GM12878 (cell line): ENCODE measurements at regions of chrX and their contacts with region 1.

Region 1: GRCh38 chrX:48826135-48826875 is at the start of gene ERAS:
- DNase-seq: no peak
- ATAC-seq: no peak
- H3K4me3 ChIP-seq: no peak within 1 kb of the TSS
- H3K27ac ChIP-seq: no peak within 1 kb of the TSS
- H3K4me1 ChIP-seq: no peaks in the 10 kb centered on the region
- H3K27me3 ChIP-seq: 0 out of 4 replicates have a peak, but pooled peaks cover 0 to 2% of the 10 kb centered on the region in 2 experiments
- CTCF ChIP-seq: 0 out of 6 replicates have a peak, but pooled peaks of 1 of the 3 experiments have one; percentile 5
- EP300 ChIP-seq: no peak
- POLR2A ChIP-seq: no peak
- RAD21 ChIP-seq: no peak
- polyA plus RNA-seq, gene ERAS: not detected

Region 2: DNA sequence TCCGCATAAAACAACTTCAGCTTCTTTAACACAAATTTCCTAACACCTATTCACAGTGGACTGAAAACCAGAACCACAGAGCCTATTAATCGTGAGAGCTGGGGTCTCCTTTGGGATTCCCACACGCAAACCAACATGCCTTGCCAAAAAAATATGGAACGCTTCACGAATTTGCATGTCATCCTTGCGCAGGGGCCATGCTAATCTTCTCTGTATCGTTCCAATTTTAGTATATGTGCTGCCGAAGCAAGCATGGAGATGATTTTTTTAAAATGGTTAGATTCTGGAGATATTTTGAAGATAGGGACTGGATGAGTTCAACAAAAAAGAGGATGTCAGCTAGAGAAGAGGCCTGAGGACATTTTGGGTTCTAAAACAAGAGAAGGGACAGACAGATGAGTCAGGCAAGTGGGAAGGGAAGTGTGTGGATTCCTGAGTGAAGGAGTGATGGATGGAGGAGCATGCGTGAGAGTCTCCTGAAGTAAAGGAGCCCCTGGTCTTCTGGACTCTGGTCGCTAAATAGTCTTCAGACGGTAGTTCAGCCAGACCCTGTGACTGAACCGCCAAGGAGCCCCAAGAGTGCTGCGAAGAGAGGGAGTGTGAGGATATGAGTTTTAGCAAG is 49.4 kb before region 1 on chrX:
- CTCF ChIA-PET with region 1: no interaction called
- POLR2A ChIA-PET with region 1: no interaction called
- RAD21 ChIA-PET with region 1: no interaction called
- SMC1A ChIA-PET with region 1: no interaction called
- in situ Hi-C with region 1: loop called (anchors 10 kb)
- intact Hi-C with region 1: no loop called
- DNase-seq: no peak
- ATAC-seq: no peak
- H3K4me3 ChIP-seq: no peak overlapping the region
- H3K27ac ChIP-seq: no peak overlapping the region
- H3K4me1 ChIP-seq: no peaks in the 10 kb centered on the region
- H3K27me3 ChIP-seq: no peaks in the 10 kb centered on the region
- CTCF ChIP-seq: no peak
- EP300 ChIP-seq: no peak
- POLR2A ChIP-seq: no peak
- RAD21 ChIP-seq: no peak

Region 3: GRCh38 chrX:48794911-48795501 is 31.3 kb before region 1 on chrX:
- CTCF ChIA-PET with region 1: no interaction called
- POLR2A ChIA-PET with region 1: no interaction called
- RAD21 ChIA-PET with region 1: no interaction called
- SMC1A ChIA-PET with region 1: no interaction called
- in situ Hi-C with region 1: loop called (anchors 5 kb)
- intact Hi-C with region 1: no loop called
- DNase-seq: no peak
- ATAC-seq: no peak
- H3K4me3 ChIP-seq: no peak overlapping the region
- H3K27ac ChIP-seq: no peak overlapping the region
- H3K4me1 ChIP-seq: no peaks in the 10 kb centered on the region
- H3K27me3 ChIP-seq: no peaks in the 10 kb centered on the region
- CTCF ChIP-seq: no peak
- EP300 ChIP-seq: no peak
- POLR2A ChIP-seq: no peak
- RAD21 ChIP-seq: no peak